WTC11 (cell line): ENCODE measurements at regions of chr18 and their contacts with region 1.

Region 1: DNA sequence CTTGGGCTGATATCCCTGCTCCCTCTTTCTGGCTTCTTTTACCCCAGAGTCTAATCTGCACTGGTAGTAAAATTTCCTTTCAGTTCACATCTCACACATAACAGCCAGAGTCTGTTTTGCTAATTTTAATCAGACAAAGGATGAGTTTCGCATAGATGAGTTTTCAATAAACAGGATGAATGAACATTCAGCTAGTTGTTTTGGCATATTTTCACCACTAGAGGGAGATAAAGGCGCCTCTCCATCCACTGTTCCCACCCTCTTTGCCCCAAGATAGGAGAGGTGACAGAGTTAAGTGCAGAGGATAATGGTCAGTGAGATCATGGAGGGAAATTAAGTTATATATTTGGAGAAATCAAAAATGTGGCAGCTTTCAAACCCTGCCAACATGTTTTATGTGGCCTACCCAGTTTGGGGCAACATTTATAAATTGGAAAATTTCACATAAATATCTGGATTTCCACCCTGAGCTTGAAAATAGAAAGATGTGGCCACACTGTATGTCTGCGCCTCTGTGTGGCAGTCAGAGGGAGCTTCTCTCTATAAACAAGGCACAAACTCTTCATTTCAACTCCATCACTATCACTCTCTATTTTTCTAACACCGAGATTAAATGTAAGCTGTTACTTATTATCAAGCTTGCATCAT is 48.5 kb upstream of the DTNA start:
- DNase-seq: no peak
- ATAC-seq: peak; percentile 54
- H3K4me3 Mint-ChIP-seq: peak overlapping the region; percentile 24
- H3K27ac Mint-ChIP-seq: peak overlapping the region; percentile 99
- H3K4me1 Mint-ChIP-seq: peaks cover 56% of the 10 kb centered on the region
- H3K27me3 Mint-ChIP-seq: no peaks in the 10 kb centered on the region
- CTCF ChIP-seq: peak; percentile 72

Region 2: GRCh38 chr18:34122724-34123334 is 538.8 kb before region 1 on chr18:
- CTCF ChIA-PET with region 1: interaction called, 15 read pairs
- POLR2A ChIA-PET with region 1: no interaction called
- DNase-seq: peak; percentile 21
- ATAC-seq: peak; percentile 73
- H3K4me3 Mint-ChIP-seq: no peak overlapping the region
- H3K27ac Mint-ChIP-seq: no peak overlapping the region
- H3K4me1 Mint-ChIP-seq: no peaks in the 10 kb centered on the region
- H3K27me3 Mint-ChIP-seq: peaks cover 42% of the 10 kb centered on the region
- CTCF ChIP-seq: peak; percentile 70

Region 3: GRCh38 chr18:34548118-34548972 is 113.2 kb before region 1 on chr18:
- CTCF ChIA-PET with region 1: interaction called, 14 read pairs
- POLR2A ChIA-PET with region 1: no interaction called
- DNase-seq: no peak
- ATAC-seq: peak; percentile 89
- H3K4me3 Mint-ChIP-seq: peak overlapping the region; percentile 44
- H3K27ac Mint-ChIP-seq: peak overlapping the region; percentile 81
- H3K4me1 Mint-ChIP-seq: peaks cover 77% of the 10 kb centered on the region
- H3K27me3 Mint-ChIP-seq: no peaks in the 10 kb centered on the region
- CTCF ChIP-seq: no peak

Region 4: GRCh38 chr18:34592961-34593382 is 68.6 kb before region 1 on chr18:
- CTCF ChIA-PET with region 1: interaction called, 19 read pairs
- POLR2A ChIA-PET with region 1: interaction called, 5 read pairs
- DNase-seq: peak; percentile 43
- ATAC-seq: peak; percentile 87
- H3K4me3 Mint-ChIP-seq: peak overlapping the region; percentile 69
- H3K27ac Mint-ChIP-seq: peak overlapping the region; percentile 95
- H3K4me1 Mint-ChIP-seq: peaks cover 47% of the 10 kb centered on the region
- H3K27me3 Mint-ChIP-seq: no peaks in the 10 kb centered on the region
- CTCF ChIP-seq: no peak

Region 5: GRCh38 chr18:34647251-34647650 is 14.3 kb before region 1 on chr18:
- CTCF ChIA-PET with region 1: interaction called, 50 read pairs
- POLR2A ChIA-PET with region 1: interaction called, 3 read pairs
- DNase-seq: peak; percentile 35
- ATAC-seq: peak; percentile 99
- H3K4me3 Mint-ChIP-seq: no peak overlapping the region
- H3K27ac Mint-ChIP-seq: no peak overlapping the region
- H3K4me1 Mint-ChIP-seq: peaks cover 41% of the 10 kb centered on the region
- H3K27me3 Mint-ChIP-seq: no peaks in the 10 kb centered on the region
- CTCF ChIP-seq: no peak

Region 6: DNA sequence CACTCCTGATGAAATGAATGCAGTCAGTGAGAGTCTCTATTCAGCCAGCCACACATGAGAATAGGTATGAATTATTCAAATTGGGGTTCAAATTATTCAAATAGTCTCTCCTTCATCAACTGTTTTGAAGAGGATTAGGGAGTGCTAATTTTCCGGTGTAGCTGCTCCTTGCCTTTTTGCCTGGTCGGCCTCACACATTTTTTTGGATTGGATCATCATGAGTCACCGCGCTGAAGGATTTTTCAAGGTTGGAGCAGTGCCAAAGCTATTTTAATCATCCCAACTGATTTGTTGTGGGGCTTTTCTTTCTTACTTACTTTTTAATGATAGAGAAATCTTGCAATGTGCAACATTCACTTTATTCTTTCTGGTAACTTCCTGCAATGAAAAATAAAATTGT is 46.1 kb after region 1 on chr18:
- CTCF ChIA-PET with region 1: interaction called, 15 read pairs
- POLR2A ChIA-PET with region 1: no interaction called
- DNase-seq: no peak
- ATAC-seq: peak; percentile 42
- H3K4me3 Mint-ChIP-seq: peak overlapping the region; percentile 16
- H3K27ac Mint-ChIP-seq: peak overlapping the region; percentile 90
- H3K4me1 Mint-ChIP-seq: peaks cover 48% of the 10 kb centered on the region
- H3K27me3 Mint-ChIP-seq: no peaks in the 10 kb centered on the region
- CTCF ChIP-seq: no peak

Region 7: DNA sequence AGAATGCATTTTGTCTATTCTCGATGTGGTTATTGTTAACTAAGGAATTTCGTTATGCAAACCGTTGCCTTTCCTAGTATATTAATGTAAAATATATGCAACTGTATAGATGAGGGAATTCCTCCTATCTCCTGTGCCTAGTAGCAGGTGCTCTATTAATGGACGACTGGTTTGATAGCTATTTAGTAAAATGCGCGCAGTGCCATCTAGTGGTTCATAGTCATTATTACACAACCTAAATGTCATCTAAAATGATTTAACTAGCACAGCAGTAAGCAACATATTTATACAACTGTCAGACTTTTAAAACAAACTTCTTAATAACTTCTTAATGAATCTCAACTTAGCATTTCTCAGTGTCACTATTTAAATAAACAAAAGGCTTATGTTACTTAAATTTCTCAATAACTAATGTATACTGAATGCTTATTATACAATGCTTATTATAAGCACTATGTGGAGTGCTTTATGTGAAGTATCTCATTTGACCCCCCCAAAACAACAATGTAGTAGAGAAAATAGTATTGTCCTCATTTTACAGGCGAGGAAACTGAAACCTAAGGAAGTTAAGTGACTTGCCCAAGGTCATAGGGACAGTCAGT is 126.4 kb after region 1 on chr18:
- CTCF ChIA-PET with region 1: interaction called, 48 read pairs
- POLR2A ChIA-PET with region 1: no interaction called
- DNase-seq: no peak
- ATAC-seq: peak; percentile 77
- H3K4me3 Mint-ChIP-seq: no peak overlapping the region
- H3K27ac Mint-ChIP-seq: no peak overlapping the region
- H3K4me1 Mint-ChIP-seq: peaks cover 19% of the 10 kb centered on the region
- H3K27me3 Mint-ChIP-seq: no peaks in the 10 kb centered on the region
- CTCF ChIP-seq: peak; percentile 64